Right ventricle myocardium inferior (tissue), 1 donor: ENCODE measurements at regions of chr17 and their contacts with region 1.

Region 1: GRCh38 chr17:7045909-7046724 is 2.2 kb upstream of the SLC16A11 start:
- DNase-seq: no peak
- ATAC-seq: peak; percentile 48

Region 2: DNA sequence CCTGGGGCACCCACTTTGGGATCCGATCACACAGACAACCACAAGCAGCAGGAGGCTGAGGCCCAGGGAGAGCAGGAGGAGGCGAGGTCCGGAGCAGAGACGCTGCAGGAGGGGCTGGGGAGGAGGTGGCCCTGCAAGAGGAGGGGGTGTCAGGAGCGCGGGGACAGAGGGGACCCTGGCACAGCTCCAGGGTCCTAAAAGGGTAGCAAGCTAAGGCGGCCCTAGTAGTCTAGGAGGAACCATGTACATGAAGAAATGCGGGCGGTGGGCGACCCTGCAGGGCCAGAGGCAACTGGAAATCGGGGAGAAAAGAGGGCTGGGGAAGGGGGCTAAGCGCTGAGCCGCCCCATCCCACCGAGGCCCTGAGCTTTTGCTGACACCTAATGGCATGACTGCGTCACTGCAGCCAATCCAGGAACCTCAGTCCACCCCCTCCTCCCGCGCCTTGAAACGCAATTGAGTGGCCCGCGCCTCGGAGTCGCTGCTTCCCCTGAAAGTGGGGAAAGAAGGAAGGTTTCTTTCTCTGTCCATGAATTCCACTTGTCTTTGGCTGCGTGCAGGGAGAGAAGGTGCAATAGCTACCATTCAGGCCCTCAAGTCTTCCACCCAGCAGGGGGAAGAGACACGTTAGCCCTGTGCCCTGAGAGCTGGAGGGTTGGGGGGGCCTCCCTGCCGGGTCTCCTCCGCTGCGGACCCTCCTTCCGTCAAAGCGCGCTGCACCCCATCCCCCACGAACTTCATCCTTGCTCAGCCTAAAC is 131.3 kb after region 1 on chr17:
- intact Hi-C with region 1: loop called (anchors 2 kb)
- DNase-seq: peak; percentile 76
- ATAC-seq: peak; percentile 74